ENCODE measurements at regions of chr6 and their contacts with region 1.

Region 1: DNA sequence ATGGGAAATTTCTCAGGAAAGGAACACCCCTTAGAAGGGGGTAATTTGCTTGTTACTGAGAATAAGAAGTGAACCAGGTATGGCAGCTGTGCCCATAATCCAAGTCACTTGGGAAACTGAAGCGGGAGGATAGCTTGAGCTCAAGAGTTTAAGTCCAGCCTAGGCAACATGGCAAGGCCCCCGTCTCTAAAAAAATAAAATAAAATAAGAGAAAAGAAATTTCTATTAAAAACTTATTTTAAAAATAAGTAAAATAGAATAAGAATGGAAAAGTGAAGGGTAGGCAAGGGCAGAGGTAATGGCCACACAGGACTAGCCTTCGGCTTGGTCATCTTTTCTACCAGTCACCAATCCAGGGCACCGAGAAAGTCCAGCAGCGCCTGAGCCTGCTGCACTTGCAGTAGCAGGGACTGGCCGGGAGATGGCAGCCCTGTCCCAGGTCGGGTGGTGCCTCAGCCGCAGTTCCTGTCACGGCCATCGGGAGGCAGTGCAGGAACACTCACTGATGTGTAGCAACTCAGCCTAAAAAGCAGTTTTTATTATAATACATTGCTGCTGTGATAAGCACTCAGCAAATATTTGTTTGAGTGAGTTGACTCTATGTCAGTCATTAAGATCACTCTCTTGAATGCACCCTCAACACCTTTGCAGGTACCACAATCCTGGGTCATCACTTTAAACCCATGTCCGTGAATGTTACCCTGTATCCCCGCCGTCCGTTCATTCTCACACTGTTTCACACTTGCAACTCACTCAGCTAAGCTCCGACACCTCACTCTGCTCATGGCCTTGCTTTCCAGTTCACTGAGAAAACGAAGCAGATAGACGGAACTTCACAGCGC is 23.2 kb upstream of the GCM1 start:
- DNase-seq: peak; percentile 57 to 98
- H3K4me3 ChIP-seq: no peak overlapping the region
- H3K27ac ChIP-seq: no peak overlapping the region
- H3K4me1 ChIP-seq: no peaks in the 10 kb centered on the region
- H3K27me3 ChIP-seq: no peaks in the 10 kb centered on the region
- CTCF ChIP-seq: peak; percentile 100
- EP300 ChIP-seq: no peak; a peak in 1 of 3 replicates
- POLR2A ChIP-seq: no peak
- RAD21 ChIP-seq: peak; percentile 100

Region 2: GRCh38 chr6:53159558-53159957 is 12.3 kb before region 1 on chr6:
- CTCF ChIA-PET with region 1: interaction called, 11 read pairs
- POLR2A ChIA-PET with region 1: no interaction called
- DNase-seq: no peak
- H3K4me3 ChIP-seq: no peak overlapping the region
- H3K27ac ChIP-seq: no peak overlapping the region
- H3K4me1 ChIP-seq: no peaks in the 10 kb centered on the region
- H3K27me3 ChIP-seq: no peaks in the 10 kb centered on the region
- CTCF ChIP-seq: peak in 1 of 3 experiments; percentile 13; a peak in 1 of 4 replicates
- EP300 ChIP-seq: no peak
- POLR2A ChIP-seq: no peak
- RAD21 ChIP-seq: peak; percentile 15; a peak in 2 of 4 replicates

Region 3: GRCh38 chr6:53258774-53259155 is 86.9 kb after region 1 on chr6:
- CTCF ChIA-PET with region 1: interaction called, 26 read pairs
- POLR2A ChIA-PET with region 1: no interaction called
- DNase-seq: no peak
- H3K4me3 ChIP-seq: no peak overlapping the region
- H3K27ac ChIP-seq: no peak overlapping the region
- H3K4me1 ChIP-seq: no peaks in the 10 kb centered on the region
- H3K27me3 ChIP-seq: no peaks in the 10 kb centered on the region
- CTCF ChIP-seq: no peak
- EP300 ChIP-seq: no peak
- POLR2A ChIP-seq: no peak
- RAD21 ChIP-seq: no peak

Region 4: GRCh38 chr6:53300656-53301551 is 129.1 kb after region 1 on chr6:
- CTCF ChIA-PET with region 1: interaction called, 46 read pairs
- POLR2A ChIA-PET with region 1: no interaction called
- DNase-seq: no peak
- H3K4me3 ChIP-seq: no peak overlapping the region
- H3K27ac ChIP-seq: no peak overlapping the region
- H3K4me1 ChIP-seq: peaks cover 0 to 7% (median under 1%) of the 10 kb centered on the region in 4 experiments; a peak in 1 of 7 replicates
- H3K27me3 ChIP-seq: no peaks in the 10 kb centered on the region
- CTCF ChIP-seq: no peak
- EP300 ChIP-seq: no peak
- POLR2A ChIP-seq: no peak
- RAD21 ChIP-seq: no peak

Region 5: GRCh38 chr6:53437557-53438202 is 265.9 kb after region 1 on chr6:
- CTCF ChIA-PET with region 1: interaction called, 34 read pairs
- POLR2A ChIA-PET with region 1: no interaction called
- DNase-seq: no peak
- H3K4me3 ChIP-seq: no peak overlapping the region
- H3K27ac ChIP-seq: no peak overlapping the region
- H3K4me1 ChIP-seq: no peaks in the 10 kb centered on the region; a peak in 1 of 7 replicates
- H3K27me3 ChIP-seq: no peaks in the 10 kb centered on the region
- CTCF ChIP-seq: peak in 2 of 3 experiments; percentile 75 to 84; a peak in 3 of 4 replicates
- EP300 ChIP-seq: no peak
- POLR2A ChIP-seq: no peak
- RAD21 ChIP-seq: peak; percentile 81 to 83